ENCODE measurements at regions of chr18 and their contacts with region 1.

Region 1: DNA sequence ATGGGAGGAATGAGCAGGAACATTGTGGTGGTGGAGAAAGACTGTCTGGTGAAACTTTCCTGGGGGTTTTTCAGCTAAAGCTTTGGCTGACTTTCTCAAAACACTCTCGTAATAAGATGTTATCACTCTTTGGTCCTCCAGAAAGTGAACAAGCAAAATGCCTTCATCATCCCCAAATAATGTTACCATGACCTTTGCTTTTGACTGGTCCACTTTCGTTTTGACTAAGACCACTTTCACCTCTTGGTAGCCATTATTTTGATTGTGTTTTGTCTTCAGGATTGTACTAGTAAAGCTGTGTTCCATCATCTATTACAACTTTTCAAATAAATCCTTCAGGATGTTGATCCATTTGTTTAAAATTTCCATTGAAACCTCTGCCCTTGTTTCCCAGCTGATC is 103.2 kb downstream of the AKAIN1 start:
- DNase-seq: no peak
- H3K4me3 ChIP-seq: no peak overlapping the region
- H3K27ac ChIP-seq: no peak overlapping the region
- H3K4me1 ChIP-seq: no peaks in the 10 kb centered on the region
- H3K27me3 ChIP-seq: no peaks in the 10 kb centered on the region
- CTCF ChIP-seq: no peak
- POLR2A ChIP-seq: no peak

Region 2: DNA sequence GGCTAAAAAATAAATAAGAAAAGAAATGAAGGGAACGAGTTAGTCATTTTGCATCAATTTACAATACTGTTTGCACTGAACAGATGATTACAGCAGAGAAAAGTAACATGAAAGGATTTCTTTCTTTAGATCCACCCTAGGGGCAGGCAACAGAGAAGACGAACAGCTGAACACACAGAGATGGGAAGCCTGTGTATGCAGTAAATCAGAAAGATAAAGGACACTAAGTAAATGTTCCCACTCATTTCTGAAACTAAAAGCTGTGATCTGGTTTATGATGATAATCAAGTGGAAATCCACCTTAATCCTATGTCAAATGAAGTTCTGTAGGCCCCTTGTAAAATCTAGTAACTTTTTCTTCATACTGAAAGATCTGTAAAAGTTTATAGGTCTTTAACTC is 49.0 kb after region 1 on chr18:
- intact Hi-C with region 1: loop called (anchors 10 kb)
- DNase-seq: no peak
- H3K4me3 ChIP-seq: no peak overlapping the region
- H3K27ac ChIP-seq: no peak overlapping the region
- H3K4me1 ChIP-seq: no peaks in the 10 kb centered on the region
- H3K27me3 ChIP-seq: no peaks in the 10 kb centered on the region
- CTCF ChIP-seq: no peak
- POLR2A ChIP-seq: no peak

Region 3: GRCh38 chr18:5951515-5952091 is 857.7 kb after region 1 on chr18:
- intact Hi-C with region 1: no loop called
- DNase-seq: no peak
- H3K4me3 ChIP-seq: no peak overlapping the region
- H3K27ac ChIP-seq: no peak overlapping the region
- H3K4me1 ChIP-seq: no peaks in the 10 kb centered on the region
- H3K27me3 ChIP-seq: no peaks in the 10 kb centered on the region
- CTCF ChIP-seq: no peak
- POLR2A ChIP-seq: no peak